ENCODE measurements at regions of chr5 and their contacts with region 1.

Region 1: DNA sequence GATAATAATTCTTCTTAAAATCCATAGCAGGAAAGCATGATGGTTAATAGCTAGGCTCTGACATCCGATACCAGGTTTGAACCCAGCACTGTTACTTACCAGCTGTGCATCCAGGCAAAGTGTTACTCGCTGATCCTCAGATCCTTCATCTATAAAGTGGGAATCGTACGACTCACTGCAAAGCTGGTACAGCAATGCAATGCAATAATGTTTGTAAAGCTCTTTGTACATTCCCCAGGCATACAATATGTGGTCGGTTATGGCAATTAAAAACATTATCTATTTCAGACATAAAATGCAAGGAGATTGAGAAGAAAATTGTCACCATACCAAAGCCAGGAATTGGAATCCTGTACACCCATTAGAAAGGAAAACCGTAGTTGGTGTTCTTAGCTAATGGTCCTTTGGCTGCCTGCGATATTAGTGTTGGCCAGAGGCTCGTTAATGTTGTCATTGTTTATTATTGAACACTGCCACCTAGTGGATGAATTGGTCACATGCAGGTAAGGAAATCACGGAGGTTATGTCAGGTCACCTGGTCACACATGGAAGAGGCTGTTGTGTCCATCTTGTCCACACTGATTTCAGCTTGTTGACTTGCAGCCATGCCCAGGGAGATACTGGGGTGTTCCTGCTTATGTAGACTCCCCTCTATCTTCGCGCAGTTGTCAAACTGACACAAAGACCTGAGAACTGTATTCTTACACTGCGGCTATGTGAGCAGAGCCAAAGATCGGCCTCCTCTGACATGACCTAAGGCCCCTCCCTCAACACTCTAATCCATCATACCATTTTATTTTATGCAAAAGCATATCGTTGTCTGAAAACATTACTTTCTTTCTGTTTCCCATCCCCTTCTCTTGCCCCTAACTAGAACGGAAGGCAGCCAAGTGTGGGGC is 87.5 kb upstream of the PPP2R2B start:
- DNase-seq: peak; percentile 15
- H3K4me3 ChIP-seq: no peak overlapping the region
- H3K27ac ChIP-seq: no peak overlapping the region
- H3K4me1 ChIP-seq: no peaks in the 10 kb centered on the region
- H3K27me3 ChIP-seq: no peaks in the 10 kb centered on the region
- CTCF ChIP-seq: peak; percentile 61 to 84 (median 79)

Region 2: DNA sequence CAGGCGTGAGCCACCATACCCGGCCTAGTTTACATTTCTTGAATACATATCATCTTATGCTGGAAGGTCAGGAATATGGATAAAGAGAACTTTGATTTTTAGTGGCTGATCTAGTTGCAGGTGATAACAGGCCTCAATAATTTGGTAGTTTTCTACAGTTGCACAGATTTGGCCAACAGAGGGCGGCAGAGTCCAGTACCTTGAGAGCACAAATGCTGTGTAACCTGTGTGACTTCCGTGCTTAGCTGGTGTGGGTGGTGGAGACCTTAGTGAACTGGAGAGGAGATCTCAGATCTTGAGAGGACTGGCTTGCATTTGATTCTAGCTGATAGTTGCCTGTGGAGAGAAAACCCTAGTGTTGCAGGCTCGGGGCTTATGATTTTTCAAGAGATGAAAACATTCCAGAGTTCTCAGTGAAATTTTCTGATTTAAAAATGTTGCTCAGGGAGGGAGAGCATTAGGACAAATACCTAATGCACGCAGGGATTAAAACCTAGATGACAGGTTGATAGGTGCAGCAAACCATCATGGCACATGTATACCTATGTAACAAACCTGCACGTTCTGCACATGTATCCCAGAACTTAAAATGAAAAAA is 432.7 kb before region 1 on chr5:
- dilution Hi-C with region 1: loop called (anchors 25 kb)
- DNase-seq: no peak
- H3K4me3 ChIP-seq: no peak overlapping the region
- H3K27ac ChIP-seq: no peak overlapping the region
- H3K4me1 ChIP-seq: peaks cover under 1% of the 10 kb centered on the region
- H3K27me3 ChIP-seq: no peaks in the 10 kb centered on the region
- CTCF ChIP-seq: peak; percentile 85 to 92 (median 91)

Region 3: GRCh38 chr5:146595088-146595487 is 370.9 kb before region 1 on chr5:
- dilution Hi-C with region 1: no loop called
- DNase-seq: no peak
- H3K4me3 ChIP-seq: no peak overlapping the region
- H3K27ac ChIP-seq: no peak overlapping the region
- H3K4me1 ChIP-seq: no peaks in the 10 kb centered on the region
- H3K27me3 ChIP-seq: no peaks in the 10 kb centered on the region
- CTCF ChIP-seq: no peak

Region 4: DNA sequence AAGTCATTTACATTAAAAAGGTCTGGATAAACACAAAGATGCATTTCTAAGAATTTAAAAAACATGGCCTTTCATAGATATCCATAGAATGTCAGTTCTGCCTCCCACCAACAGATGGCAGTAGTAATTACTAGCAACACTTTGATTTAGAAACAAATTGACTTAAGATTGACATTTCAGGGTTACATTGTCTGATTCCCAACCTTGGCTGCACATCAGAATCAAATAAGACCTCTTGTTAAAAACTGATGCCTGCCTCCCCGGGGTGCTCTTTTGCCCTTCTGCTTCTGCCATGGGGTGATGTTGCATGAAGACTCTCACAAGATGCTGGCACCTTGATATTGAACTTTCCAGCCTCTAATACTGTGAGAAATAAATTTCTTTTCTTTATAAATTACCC is 303.8 kb before region 1 on chr5:
- dilution Hi-C with region 1: loop called (anchors 25 kb)
- DNase-seq: no peak
- H3K4me3 ChIP-seq: no peak overlapping the region
- H3K27ac ChIP-seq: no peak overlapping the region
- H3K4me1 ChIP-seq: no peaks in the 10 kb centered on the region
- H3K27me3 ChIP-seq: no peaks in the 10 kb centered on the region
- CTCF ChIP-seq: peak in 2 of 3 experiments; percentile 26 to 57

Region 5: GRCh38 chr5:146731909-146732659 is 233.9 kb before region 1 on chr5:
- dilution Hi-C with region 1: no loop called
- DNase-seq: peak; percentile 26
- H3K4me3 ChIP-seq: no peak overlapping the region
- H3K27ac ChIP-seq: peak overlapping the region; percentile 2
- H3K4me1 ChIP-seq: peaks cover 11% of the 10 kb centered on the region
- H3K27me3 ChIP-seq: no peaks in the 10 kb centered on the region
- CTCF ChIP-seq: no peak

Measured in keratinocyte (primary cell).